ENCODE measurements at regions of chr17 and their contacts with region 1.

Region 1: GRCh38 chr17:78661093-78661770 is 84.0 kb upstream of the DNAH17 start:
- DNase-seq: peak; percentile 40 to 70
- H3K4me3 ChIP-seq: no peak overlapping the region
- H3K27ac ChIP-seq: no peak overlapping the region
- H3K4me1 ChIP-seq: peaks cover 5% of the 10 kb centered on the region
- H3K27me3 ChIP-seq: no peaks in the 10 kb centered on the region
- CTCF ChIP-seq: no peak

Region 2: GRCh38 chr17:78617511-78618061 is 43.6 kb before region 1 on chr17:
- CTCF ChIA-PET with region 1: no interaction called
- POLR2A ChIA-PET with region 1: no interaction called
- intact Hi-C with region 1: no loop called
- DNase-seq: no peak
- H3K4me3 ChIP-seq: no peak overlapping the region
- H3K27ac ChIP-seq: no peak overlapping the region
- H3K4me1 ChIP-seq: no peaks in the 10 kb centered on the region
- H3K27me3 ChIP-seq: no peaks in the 10 kb centered on the region
- CTCF ChIP-seq: no peak

Region 3: GRCh38 chr17:78677303-78678221 is 16.3 kb after region 1 on chr17:
- CTCF ChIA-PET with region 1: no interaction called
- POLR2A ChIA-PET with region 1: no interaction called
- intact Hi-C with region 1: loop called (anchors 2 kb)
- DNase-seq: no peak
- H3K4me3 ChIP-seq: no peak overlapping the region
- H3K27ac ChIP-seq: no peak overlapping the region
- H3K4me1 ChIP-seq: peaks cover 22% of the 10 kb centered on the region
- H3K27me3 ChIP-seq: no peaks in the 10 kb centered on the region
- CTCF ChIP-seq: no peak

Measured in PC-9 (cell line).